Activated CD4-positive, alpha-beta T cell treated with anti-CD3 and anti-CD28 coated beads for 36 hours (primary cell): ENCODE measurements at regions of chr6 and their contacts with region 1.

Region 1: DNA sequence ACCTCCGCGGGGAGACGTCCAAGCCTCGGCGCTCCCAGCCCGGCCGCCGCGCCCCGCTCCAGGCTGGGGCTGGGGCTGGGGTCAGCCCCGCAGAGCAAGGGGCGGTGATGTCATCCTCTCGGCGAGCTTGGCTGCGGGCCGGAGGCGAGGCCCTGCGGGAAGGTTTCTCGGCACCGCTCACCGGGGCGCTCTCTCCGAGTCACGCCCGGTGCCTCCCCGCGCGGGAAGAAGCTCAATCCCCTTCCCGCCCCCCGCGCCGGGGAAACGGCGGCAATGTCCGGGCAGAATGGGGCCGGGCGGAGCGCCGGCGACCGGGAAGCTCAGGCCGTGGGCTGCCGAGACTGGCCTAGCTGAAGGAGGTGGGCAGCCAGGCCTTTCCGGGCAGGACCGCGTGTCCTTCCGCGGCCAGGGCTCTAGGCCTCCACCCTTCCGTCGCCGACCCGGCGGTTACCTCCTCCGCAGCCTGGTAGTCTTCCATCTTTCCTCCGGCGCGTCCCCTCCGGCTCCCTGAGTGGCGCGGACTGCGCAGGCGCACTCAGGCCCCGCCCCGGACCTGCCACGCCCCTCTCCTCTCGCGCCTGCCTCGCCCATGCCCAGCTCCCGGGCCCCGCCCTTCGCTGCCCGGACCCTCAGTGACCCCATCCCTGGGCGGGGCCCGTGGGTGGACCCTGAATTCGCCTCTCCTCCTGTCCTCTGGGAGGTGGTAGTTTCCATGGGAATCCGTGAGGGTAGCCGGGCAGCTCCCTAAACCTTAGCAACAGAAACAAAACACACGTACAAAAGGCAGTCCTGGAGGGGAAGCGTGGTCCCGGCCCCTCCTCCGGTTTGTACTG is at the start of gene DYNLT1:
- DNase-seq: peak; percentile 94
- ATAC-seq: peak; percentile 43
- H3K4me3 Mint-ChIP-seq: peak within 1 kb of the TSS; percentile 99
- H3K27ac Mint-ChIP-seq: peak within 1 kb of the TSS; percentile 99
- H3K4me1 Mint-ChIP-seq: peaks cover 77% of the 10 kb centered on the region
- H3K27me3 Mint-ChIP-seq: no peaks in the 10 kb centered on the region
- total RNA-seq, gene DYNLT1: 116 to 118 TPM

Region 2: DNA sequence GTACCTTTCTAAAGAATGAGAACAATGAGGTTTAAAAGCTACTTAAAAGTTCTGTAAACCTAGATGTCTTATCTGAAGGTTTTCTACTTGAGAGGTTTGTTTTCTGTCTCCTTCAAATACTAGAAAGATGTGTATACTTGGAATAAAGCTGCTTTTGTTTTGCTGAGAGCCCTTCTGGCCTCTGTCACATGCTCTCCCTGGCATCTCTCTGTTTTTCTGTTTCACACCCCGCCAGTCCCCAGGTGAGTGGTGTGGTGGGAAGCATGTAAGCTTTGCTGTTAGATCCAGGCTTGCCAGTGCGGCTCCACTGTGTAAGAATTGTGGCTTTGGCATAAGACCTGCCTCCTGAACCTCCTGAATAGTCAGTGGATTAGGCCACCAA is 764.6 kb before region 1 on chr6:
- CTCF ChIA-PET with region 1: no interaction called
- POLR2A ChIA-PET with region 1: no interaction called
- intact Hi-C with region 1: loop called in 1 of 2 experiments (anchors 10 kb)
- DNase-seq: no peak
- ATAC-seq: no peak
- H3K4me3 Mint-ChIP-seq: no peak overlapping the region
- H3K27ac Mint-ChIP-seq: peak overlapping the region; percentile 21
- H3K4me1 Mint-ChIP-seq: peaks cover 79% of the 10 kb centered on the region
- H3K27me3 Mint-ChIP-seq: no peaks in the 10 kb centered on the region

Region 3: GRCh38 chr6:158213925-158214674 is 430.3 kb before region 1 on chr6:
- CTCF ChIA-PET with region 1: no interaction called
- POLR2A ChIA-PET with region 1: no interaction called
- intact Hi-C with region 1: loop called in 1 of 2 experiments (anchors 2 kb)
- DNase-seq: peak; percentile 75
- ATAC-seq: peak; percentile 97
- H3K4me3 Mint-ChIP-seq: no peak overlapping the region
- H3K27ac Mint-ChIP-seq: no peak overlapping the region
- H3K4me1 Mint-ChIP-seq: peaks cover 10% of the 10 kb centered on the region
- H3K27me3 Mint-ChIP-seq: no peaks in the 10 kb centered on the region

Region 4: DNA sequence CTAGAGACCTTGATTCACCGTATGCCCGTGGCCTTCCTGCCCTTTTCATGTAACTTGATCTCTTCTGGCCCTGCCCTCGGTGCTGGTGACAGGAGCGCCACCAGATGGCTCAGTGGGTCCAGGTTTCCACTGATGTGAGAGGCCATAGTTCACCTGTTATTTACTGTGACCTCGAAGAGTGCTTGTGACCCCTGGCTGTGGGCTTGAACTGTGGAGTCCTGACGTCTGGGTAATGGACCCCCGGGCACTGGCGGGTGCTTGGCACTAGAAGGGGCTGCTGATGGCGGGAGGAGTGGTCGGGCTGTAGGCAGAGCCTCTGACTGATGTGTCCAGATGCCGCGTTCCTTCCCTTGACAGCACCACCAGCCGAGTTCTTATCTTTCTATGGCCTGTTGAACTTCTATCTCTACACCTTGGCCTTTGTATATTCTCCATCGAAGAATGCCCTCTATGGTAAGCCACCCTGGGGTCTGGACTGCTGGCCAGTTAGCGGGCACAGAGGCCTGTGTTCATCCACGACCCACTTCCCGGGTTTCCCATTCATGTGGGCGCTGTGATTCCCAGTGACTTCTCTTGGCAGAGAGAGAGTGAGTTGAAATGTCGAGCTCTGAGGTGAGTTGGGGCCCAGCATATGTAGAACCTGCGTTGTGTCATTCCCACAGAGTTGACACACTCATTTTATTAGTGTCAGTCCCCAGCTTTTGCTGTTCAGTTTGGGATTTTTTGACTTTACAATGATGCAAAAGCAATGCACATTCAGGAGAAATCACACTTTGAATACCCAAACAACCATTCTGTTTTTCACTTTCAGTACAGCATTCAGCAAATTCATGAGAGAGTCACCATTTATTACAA is 14.9 kb before region 1 on chr6:
- CTCF ChIA-PET with region 1: interaction called, 4 read pairs
- POLR2A ChIA-PET with region 1: interaction called, 21 read pairs
- intact Hi-C with region 1: no loop called
- DNase-seq: peak; percentile 62
- ATAC-seq: peak; percentile 77
- H3K4me3 Mint-ChIP-seq: no peak overlapping the region
- H3K27ac Mint-ChIP-seq: peak overlapping the region; percentile 69
- H3K4me1 Mint-ChIP-seq: peaks cover 38% of the 10 kb centered on the region
- H3K27me3 Mint-ChIP-seq: no peaks in the 10 kb centered on the region

Region 5: GRCh38 chr6:158999666-159000403 is 355.4 kb after region 1 on chr6 and contains the start of gene RSPH3:
- CTCF ChIA-PET with region 1: no interaction called
- POLR2A ChIA-PET with region 1: no interaction called
- intact Hi-C with region 1: loop called in 1 of 2 experiments (anchors 2 kb)
- DNase-seq: peak; percentile 97
- ATAC-seq: peak; percentile 86
- H3K4me3 Mint-ChIP-seq: peak within 1 kb of the TSS; percentile 82
- H3K27ac Mint-ChIP-seq: peak within 1 kb of the TSS; percentile 66
- H3K4me1 Mint-ChIP-seq: peaks cover 46% of the 10 kb centered on the region
- H3K27me3 Mint-ChIP-seq: no peaks in the 10 kb centered on the region
- total RNA-seq, gene RSPH3: 6.5 to 9.3 TPM

Region 6: DNA sequence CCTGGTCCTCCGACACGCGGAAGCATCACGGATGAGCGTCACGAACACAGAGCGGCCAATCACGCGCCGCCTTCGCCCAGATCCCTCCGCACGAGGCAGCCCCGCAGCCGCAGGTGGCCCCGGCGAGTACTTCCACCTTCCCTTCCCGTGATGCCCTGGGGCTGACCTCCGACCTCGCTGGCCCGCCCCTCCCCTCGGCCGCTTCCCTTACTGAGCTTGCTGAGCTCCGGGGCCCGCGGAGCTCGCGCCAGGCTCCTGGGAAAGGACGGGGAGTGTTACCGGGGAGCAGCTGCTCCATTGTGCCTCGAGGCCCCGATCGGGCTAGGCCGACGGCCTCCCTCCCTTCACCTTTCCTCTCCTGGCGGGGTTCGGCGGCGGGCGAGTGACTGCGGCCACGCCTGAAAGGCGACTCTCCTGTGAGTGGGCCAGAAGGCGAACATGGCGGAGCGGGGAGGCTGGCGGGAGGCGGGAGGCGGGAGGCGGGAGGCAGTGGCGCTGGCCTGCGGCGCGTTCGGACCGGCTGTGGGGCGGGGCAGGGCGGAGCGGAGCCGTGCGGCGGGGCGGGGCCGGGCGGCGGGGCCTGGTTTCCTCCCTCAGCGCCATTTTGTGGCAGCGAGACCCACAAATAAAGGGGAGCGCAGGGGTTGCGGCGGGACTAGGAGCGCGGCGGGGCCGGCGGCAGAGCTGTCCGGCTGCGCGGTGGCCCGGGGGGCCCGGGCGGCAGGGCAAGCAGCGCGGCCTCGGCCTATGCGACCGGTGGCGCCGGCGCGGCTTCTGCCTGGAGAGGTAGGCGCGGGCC is 1082.7 kb after region 1 on chr6 and contains the start of gene WTAP:
- CTCF ChIA-PET with region 1: no interaction called
- POLR2A ChIA-PET with region 1: no interaction called
- intact Hi-C with region 1: loop called in 1 of 2 experiments (anchors 1 kb)
- DNase-seq: peak; percentile 99
- ATAC-seq: peak; percentile 91
- H3K4me3 Mint-ChIP-seq: peak within 1 kb of the TSS; percentile 95
- H3K27ac Mint-ChIP-seq: peak within 1 kb of the TSS; percentile 98
- H3K4me1 Mint-ChIP-seq: peaks cover 47% of the 10 kb centered on the region
- H3K27me3 Mint-ChIP-seq: no peaks in the 10 kb centered on the region
- total RNA-seq, gene WTAP: 87.2 to 91.5 TPM